PC-3 (cell line): ENCODE measurements at regions of chr16 and their contacts with region 1.

Region 1: DNA sequence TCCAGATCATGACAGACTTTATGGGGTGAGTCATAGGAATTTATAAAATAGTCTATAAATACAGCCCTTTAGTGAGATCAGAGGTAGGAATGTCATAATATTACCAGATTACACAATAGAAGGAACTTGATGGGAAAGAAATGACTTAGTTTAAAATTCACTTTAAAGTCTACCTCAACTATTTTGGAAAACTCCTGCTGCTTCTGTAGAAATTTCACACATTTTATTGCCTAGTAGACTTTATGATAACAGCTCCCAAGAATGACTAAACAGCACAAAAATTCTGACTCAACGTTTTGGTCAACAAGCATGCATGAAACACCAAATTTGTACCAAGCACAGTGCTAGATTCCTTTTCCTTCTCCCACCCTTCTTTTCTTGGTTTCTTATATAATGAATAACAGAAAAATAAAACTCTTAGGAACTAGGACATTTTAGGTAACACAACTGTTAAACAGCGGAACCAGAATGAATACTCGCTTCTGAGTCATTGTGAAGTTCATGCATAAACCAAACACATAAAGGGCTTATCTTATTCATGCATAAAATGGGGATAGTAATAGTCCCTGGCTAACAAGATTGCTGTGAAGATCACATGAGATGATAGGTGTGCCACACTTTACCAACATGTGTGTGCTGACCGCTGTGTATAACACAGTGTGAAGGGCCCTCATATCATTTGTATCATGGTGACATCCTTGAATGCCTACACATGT is 243.9 kb downstream of the CDH8 start:
- DNase-seq: peak; percentile 87
- ATAC-seq: peak; percentile 82
- H3K4me3 ChIP-seq: peak overlapping the region; percentile 17; the same call in 1 of the 2 replicates
- H3K27ac ChIP-seq: peak overlapping the region; percentile 98
- H3K4me1 ChIP-seq: peaks cover 26% of the 10 kb centered on the region
- H3K27me3 ChIP-seq: no peaks in the 10 kb centered on the region
- CTCF ChIP-seq: no peak

Region 2: GRCh38 chr16:61547626-61548025 is 244.7 kb before region 1 on chr16:
- CTCF ChIA-PET with region 1: no interaction called
- POLR2A ChIA-PET with region 1: no interaction called
- intact Hi-C with region 1: no loop called
- DNase-seq: no peak
- ATAC-seq: no peak
- H3K4me3 ChIP-seq: no peak overlapping the region
- H3K27ac ChIP-seq: no peak overlapping the region
- H3K4me1 ChIP-seq: no peaks in the 10 kb centered on the region
- H3K27me3 ChIP-seq: no peaks in the 10 kb centered on the region
- CTCF ChIP-seq: no peak

Region 3: GRCh38 chr16:61659936-61660335 is 132.4 kb before region 1 on chr16:
- CTCF ChIA-PET with region 1: no interaction called
- POLR2A ChIA-PET with region 1: no interaction called
- intact Hi-C with region 1: loop called (anchors 10 kb)
- DNase-seq: peak; percentile 3
- ATAC-seq: peak; percentile 73
- H3K4me3 ChIP-seq: no peak overlapping the region
- H3K27ac ChIP-seq: no peak overlapping the region
- H3K4me1 ChIP-seq: no peaks in the 10 kb centered on the region
- H3K27me3 ChIP-seq: no peaks in the 10 kb centered on the region
- CTCF ChIP-seq: no peak

Region 4: DNA sequence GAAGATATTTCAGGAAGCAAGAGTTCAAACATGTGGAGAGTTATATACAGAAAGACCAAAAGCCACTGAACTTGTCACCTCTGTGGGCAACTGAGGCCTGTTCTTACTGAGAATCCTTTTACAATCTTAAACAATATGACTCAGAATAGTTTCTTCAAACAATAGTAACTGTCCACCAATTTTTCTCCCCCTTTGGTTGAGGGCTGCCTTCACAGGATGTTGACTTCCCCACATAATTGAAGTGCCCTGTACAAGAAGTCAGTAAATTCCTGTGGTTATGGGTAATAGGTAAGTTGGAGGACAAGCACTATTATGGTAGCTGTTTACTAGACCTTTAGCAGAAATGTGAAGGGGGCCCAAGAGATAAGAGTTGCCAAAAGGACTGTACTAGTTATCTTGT is 28.0 kb after region 1 on chr16:
- CTCF ChIA-PET with region 1: no interaction called
- POLR2A ChIA-PET with region 1: no interaction called
- intact Hi-C with region 1: loop called (anchors 2 kb)
- DNase-seq: peak; percentile 82
- ATAC-seq: peak; percentile 97
- H3K4me3 ChIP-seq: no peak overlapping the region
- H3K27ac ChIP-seq: peak overlapping the region; percentile 55
- H3K4me1 ChIP-seq: peaks cover 28% of the 10 kb centered on the region
- H3K27me3 ChIP-seq: no peaks in the 10 kb centered on the region
- CTCF ChIP-seq: no peak

Region 5: DNA sequence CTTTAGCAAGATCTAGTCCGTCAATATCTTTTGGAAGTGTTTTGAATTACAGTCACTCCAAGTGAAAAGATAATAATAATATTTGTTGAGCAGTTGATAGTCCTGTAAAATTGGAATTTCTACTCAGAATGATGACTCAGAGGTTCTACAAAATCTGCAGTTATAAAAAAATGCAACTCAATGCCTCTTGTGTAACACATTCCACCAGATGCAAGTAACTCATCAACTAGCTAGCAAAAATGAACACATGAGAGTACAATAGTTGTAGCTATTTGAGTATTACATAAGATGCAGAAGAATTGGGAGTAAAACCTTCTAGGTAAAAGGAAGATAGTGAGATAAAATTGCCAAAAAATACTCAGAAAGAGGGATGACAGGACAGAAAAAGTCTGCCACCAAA is 66.6 kb after region 1 on chr16:
- CTCF ChIA-PET with region 1: no interaction called
- POLR2A ChIA-PET with region 1: no interaction called
- intact Hi-C with region 1: no loop called
- DNase-seq: peak; percentile 61
- ATAC-seq: peak; percentile 43
- H3K4me3 ChIP-seq: no peak overlapping the region
- H3K27ac ChIP-seq: no peak overlapping the region
- H3K4me1 ChIP-seq: peaks cover 10% of the 10 kb centered on the region; the same call in 1 of the 2 replicates
- H3K27me3 ChIP-seq: no peaks in the 10 kb centered on the region
- CTCF ChIP-seq: no peak

Region 6: DNA sequence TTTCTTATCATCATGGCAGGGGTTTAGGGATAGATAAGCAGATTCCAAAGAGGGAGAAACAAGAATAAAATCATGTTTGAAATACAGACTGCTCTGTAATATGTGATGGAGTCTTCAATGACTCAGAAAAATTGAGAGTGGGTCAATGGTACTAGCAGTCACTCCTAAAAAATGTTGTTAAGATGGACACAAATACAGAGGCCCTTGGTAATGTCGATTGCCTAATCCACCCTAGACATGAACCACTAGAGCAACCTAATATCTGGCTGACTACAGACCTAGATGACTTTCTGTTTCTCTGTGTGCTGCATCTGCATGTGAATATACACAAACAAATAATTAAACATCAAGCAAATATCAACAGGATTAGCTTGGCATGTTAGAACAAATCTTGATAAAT is 108.1 kb after region 1 on chr16:
- CTCF ChIA-PET with region 1: no interaction called
- POLR2A ChIA-PET with region 1: no interaction called
- intact Hi-C with region 1: loop called (anchors 2 kb)
- DNase-seq: peak; percentile 59
- ATAC-seq: peak; percentile 13; the same call in 1 of the 2 replicates
- H3K4me3 ChIP-seq: no peak overlapping the region
- H3K27ac ChIP-seq: no peak overlapping the region
- H3K4me1 ChIP-seq: peaks cover 24% of the 10 kb centered on the region
- H3K27me3 ChIP-seq: no peaks in the 10 kb centered on the region
- CTCF ChIP-seq: no peak

Region 7: DNA sequence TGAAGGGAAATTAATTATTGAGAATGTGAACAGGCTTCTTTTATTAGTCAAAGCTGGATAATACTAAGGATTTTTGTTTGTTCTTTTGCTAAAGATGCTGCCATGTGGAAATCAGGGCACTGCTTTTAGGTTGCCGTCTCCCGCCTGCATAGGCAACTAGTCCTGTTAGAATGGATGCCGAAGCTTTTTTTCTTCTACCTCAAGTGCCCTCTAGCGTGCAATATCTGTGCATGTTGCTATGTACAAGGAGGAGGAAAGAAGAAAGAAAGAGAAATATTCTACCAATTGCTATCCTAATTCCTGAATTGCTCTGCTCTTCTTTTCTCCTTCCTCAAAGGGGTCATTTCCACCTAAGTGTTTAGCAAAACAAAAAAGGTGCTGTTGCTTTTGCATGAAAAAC is 249.0 kb after region 1 on chr16:
- CTCF ChIA-PET with region 1: no interaction called
- POLR2A ChIA-PET with region 1: no interaction called
- intact Hi-C with region 1: loop called (anchors 10 kb)
- DNase-seq: peak; percentile 68
- ATAC-seq: peak; percentile 83
- H3K4me3 ChIP-seq: no peak overlapping the region
- H3K27ac ChIP-seq: no peak overlapping the region
- H3K4me1 ChIP-seq: no peaks in the 10 kb centered on the region
- H3K27me3 ChIP-seq: no peaks in the 10 kb centered on the region; the same call in 1 of the 2 replicates
- CTCF ChIP-seq: peak; percentile 70

Region 8: GRCh38 chr16:62288990-62289629 is 496.8 kb after region 1 on chr16:
- CTCF ChIA-PET with region 1: no interaction called
- POLR2A ChIA-PET with region 1: no interaction called
- intact Hi-C with region 1: no loop called
- DNase-seq: no peak
- ATAC-seq: no peak
- H3K4me3 ChIP-seq: no peak overlapping the region
- H3K27ac ChIP-seq: no peak overlapping the region
- H3K4me1 ChIP-seq: no peaks in the 10 kb centered on the region
- H3K27me3 ChIP-seq: no peaks in the 10 kb centered on the region
- CTCF ChIP-seq: no peak